PC-9 (cell line): ENCODE measurements at regions of chr9 and their contacts with region 1.

Region 1: GRCh38 chr9:95447660-95448420 is 68.9 kb downstream of the PTCH1 start:
- DNase-seq: no peak
- H3K4me3 ChIP-seq: no peak overlapping the region
- H3K27ac ChIP-seq: no peak overlapping the region
- H3K4me1 ChIP-seq: no peaks in the 10 kb centered on the region
- H3K27me3 ChIP-seq: no peaks in the 10 kb centered on the region
- CTCF ChIP-seq: no peak

Region 2: GRCh38 chr9:95242613-95243012 is 205.2 kb before region 1 on chr9:
- CTCF ChIA-PET with region 1: no interaction called
- POLR2A ChIA-PET with region 1: no interaction called
- intact Hi-C with region 1: no loop called
- DNase-seq: no peak
- H3K4me3 ChIP-seq: no peak overlapping the region
- H3K27ac ChIP-seq: no peak overlapping the region
- H3K4me1 ChIP-seq: no peaks in the 10 kb centered on the region
- H3K27me3 ChIP-seq: no peaks in the 10 kb centered on the region
- CTCF ChIP-seq: no peak

Region 3: GRCh38 chr9:95420518-95420917 is 27.3 kb before region 1 on chr9:
- CTCF ChIA-PET with region 1: no interaction called
- POLR2A ChIA-PET with region 1: interaction called, 14 read pairs
- intact Hi-C with region 1: no loop called
- DNase-seq: no peak
- H3K4me3 ChIP-seq: no peak overlapping the region
- H3K27ac ChIP-seq: no peak overlapping the region
- H3K4me1 ChIP-seq: peaks cover 4% of the 10 kb centered on the region; the same call in 1 of the 2 replicates
- H3K27me3 ChIP-seq: no peaks in the 10 kb centered on the region
- CTCF ChIP-seq: no peak

Region 4: GRCh38 chr9:95462249-95463147 is 14.7 kb after region 1 on chr9:
- CTCF ChIA-PET with region 1: interaction called, 3 read pairs
- POLR2A ChIA-PET with region 1: interaction called, 12 read pairs
- intact Hi-C with region 1: no loop called
- DNase-seq: no peak
- H3K4me3 ChIP-seq: no peak overlapping the region
- H3K27ac ChIP-seq: no peak overlapping the region
- H3K4me1 ChIP-seq: no peaks in the 10 kb centered on the region
- H3K27me3 ChIP-seq: no peaks in the 10 kb centered on the region
- CTCF ChIP-seq: no peak